SK-N-SH (cell line): ENCODE measurements at regions of chr7 and their contacts with region 1.

Region 1: DNA sequence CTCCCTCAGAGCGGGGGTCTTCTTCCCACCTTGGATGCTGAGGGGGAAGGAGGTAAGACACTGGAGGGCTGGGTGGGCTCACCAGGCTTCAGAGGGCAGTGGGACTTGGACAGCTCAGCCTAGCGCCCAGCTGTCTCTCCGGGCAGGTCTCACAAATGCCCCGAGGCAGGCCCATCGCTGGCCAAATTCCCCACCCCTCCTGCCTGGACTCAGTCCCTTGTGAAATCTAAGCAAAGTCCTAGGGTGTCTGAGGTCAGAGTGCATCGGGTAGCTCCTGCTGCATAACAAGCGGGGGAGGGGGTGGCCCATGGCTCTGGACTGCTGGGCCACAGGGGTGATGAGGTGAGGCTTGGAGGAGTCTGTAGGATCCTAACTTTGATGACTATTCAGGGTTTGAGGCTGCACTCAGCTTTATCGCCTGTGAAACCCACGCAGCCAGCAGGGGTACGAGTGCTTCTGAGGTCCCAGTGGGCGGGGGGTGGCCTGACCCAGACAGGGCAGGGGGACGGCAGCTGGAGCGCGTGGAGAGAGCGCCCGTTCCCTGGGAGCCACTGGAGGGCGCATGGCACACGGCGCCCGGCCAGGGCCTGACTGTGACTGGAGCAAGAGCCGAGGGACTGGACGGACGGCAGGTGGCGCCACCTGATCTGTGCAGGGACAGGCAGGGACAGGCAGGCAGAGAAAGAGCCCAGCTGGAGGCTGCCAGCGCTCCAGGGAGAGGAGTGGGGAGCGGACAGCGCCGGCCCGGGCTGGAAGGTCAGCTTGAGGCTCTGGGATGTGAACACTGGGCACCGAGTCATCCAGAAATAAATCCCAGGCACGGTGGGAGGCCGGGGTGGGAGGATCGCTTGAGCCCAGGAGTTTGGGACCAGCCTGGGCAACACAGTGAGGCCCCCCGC is 10.0 kb downstream of the CYP2W1 start:
- DNase-seq: peak; percentile 98
- H3K4me3 ChIP-seq: peak overlapping the region in 1 of 2 experiments; percentile 24; a peak in 1 of 4 replicates
- H3K27ac ChIP-seq: no peak overlapping the region
- H3K4me1 ChIP-seq: peaks cover 3 to 7% of the 10 kb centered on the region in 2 experiments; a peak in 2 of 4 replicates
- H3K27me3 ChIP-seq: no peaks in the 10 kb centered on the region
- CTCF ChIP-seq: peak; percentile 100
- EP300 ChIP-seq: 0 out of 4 replicates have a peak, but pooled peaks of 1 of the 2 experiments have one; percentile 17
- RAD21 ChIP-seq: peak; percentile 100

Region 2: GRCh38 chr7:964401-965231 is 28.3 kb before region 1 on chr7:
- CTCF ChIA-PET with region 1: interaction called, 19 read pairs
- POLR2A ChIA-PET with region 1: no interaction called
- DNase-seq: peak; percentile 89
- H3K4me3 ChIP-seq: no peak overlapping the region
- H3K27ac ChIP-seq: peak overlapping the region in 1 of 2 experiments; percentile 39; a peak in 2 of 4 replicates
- H3K4me1 ChIP-seq: peaks cover 4 to 24% of the 10 kb centered on the region in 2 experiments; a peak in 2 of 4 replicates
- H3K27me3 ChIP-seq: no peaks in the 10 kb centered on the region
- CTCF ChIP-seq: peak; percentile 50
- EP300 ChIP-seq: peak in 1 of 2 experiments; percentile 80; a peak in 2 of 4 replicates
- RAD21 ChIP-seq: peak; percentile 60

Region 3: GRCh38 chr7:1028031-1028770 is 35.2 kb after region 1 on chr7:
- CTCF ChIA-PET with region 1: interaction called, 101 read pairs
- POLR2A ChIA-PET with region 1: interaction called, 3 read pairs
- DNase-seq: peak; percentile 100
- H3K4me3 ChIP-seq: peak overlapping the region; percentile 74 to 93
- H3K27ac ChIP-seq: peak overlapping the region; percentile 70 to 75
- H3K4me1 ChIP-seq: peaks cover 11 to 14% of the 10 kb centered on the region in 2 experiments; a peak in 3 of 4 replicates
- H3K27me3 ChIP-seq: no peaks in the 10 kb centered on the region
- CTCF ChIP-seq: no peak
- EP300 ChIP-seq: no peak
- RAD21 ChIP-seq: no peak

Region 4: GRCh38 chr7:1086588-1087464 is 93.9 kb after region 1 on chr7:
- CTCF ChIA-PET with region 1: interaction called, 126 read pairs
- POLR2A ChIA-PET with region 1: no interaction called
- DNase-seq: peak; percentile 94
- H3K4me3 ChIP-seq: peak overlapping the region; percentile 33 to 62
- H3K27ac ChIP-seq: peak overlapping the region in 1 of 2 experiments; percentile 31; a peak in 1 of 4 replicates
- H3K4me1 ChIP-seq: peaks cover 25 to 44% of the 10 kb centered on the region in 2 experiments
- H3K27me3 ChIP-seq: no peaks in the 10 kb centered on the region
- CTCF ChIP-seq: peak; percentile 99
- EP300 ChIP-seq: no peak
- RAD21 ChIP-seq: peak; percentile 60

Region 5: DNA sequence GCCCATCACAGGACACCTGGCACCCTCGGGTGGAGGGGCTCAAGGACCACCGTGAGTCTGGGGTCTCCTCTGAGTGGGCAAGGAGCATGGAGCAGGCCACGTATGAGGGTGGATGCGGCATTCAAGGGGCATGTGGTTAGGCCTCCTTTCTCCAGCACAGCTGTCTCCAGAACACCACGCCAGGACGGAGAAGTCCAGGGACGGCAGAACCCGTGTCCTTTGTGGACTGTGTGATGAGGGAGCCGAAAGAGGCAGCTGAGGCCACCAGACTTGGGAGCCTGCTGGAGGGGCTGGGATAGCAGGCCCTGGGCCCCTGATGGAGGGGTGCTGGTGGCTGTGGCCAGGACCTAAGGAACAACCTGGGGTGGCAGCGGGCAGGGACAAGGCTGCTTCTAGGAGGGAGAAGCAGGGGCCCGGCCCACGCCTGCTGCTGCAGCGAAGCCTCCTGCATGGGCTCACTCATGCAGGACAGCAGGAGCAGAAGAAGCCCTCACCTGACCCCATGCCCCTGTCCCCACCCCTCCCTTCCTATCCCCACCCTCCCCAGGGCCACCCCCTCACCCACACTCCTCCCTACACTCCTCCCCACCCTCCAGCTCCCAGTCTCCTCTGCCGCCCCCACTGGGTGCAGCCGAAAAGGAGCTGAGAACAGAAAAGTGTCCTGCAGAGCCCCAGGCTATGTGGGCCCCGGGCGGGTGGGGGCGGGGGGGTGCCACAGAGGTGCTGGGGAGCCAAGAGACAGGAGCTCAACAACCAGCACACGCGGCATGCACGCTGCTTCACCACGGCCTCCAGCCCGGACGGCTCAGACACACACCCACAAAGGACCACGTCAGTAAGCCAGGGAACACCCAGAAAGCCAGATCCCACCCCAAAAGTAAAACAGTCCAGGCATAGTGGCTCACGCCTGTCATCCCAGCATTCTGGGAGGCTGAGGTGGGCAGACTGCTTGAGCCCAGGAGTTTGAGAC is 137.3 kb after region 1 on chr7:
- CTCF ChIA-PET with region 1: interaction called, 65 read pairs
- POLR2A ChIA-PET with region 1: no interaction called
- DNase-seq: peak; percentile 14
- H3K4me3 ChIP-seq: no peak overlapping the region
- H3K27ac ChIP-seq: no peak overlapping the region
- H3K4me1 ChIP-seq: no peaks in the 10 kb centered on the region
- H3K27me3 ChIP-seq: no peaks in the 10 kb centered on the region
- CTCF ChIP-seq: no peak
- EP300 ChIP-seq: no peak
- RAD21 ChIP-seq: no peak

Region 6: GRCh38 chr7:1169409-1170368 is 176.7 kb after region 1 on chr7:
- CTCF ChIA-PET with region 1: interaction called, 64 read pairs
- POLR2A ChIA-PET with region 1: no interaction called
- DNase-seq: peak; percentile 86
- H3K4me3 ChIP-seq: peak overlapping the region in 1 of 2 experiments; percentile 31; a peak in 1 of 4 replicates
- H3K27ac ChIP-seq: no peak overlapping the region
- H3K4me1 ChIP-seq: peaks cover 0 to 2% of the 10 kb centered on the region in 2 experiments; a peak in 1 of 4 replicates
- H3K27me3 ChIP-seq: no peaks in the 10 kb centered on the region
- CTCF ChIP-seq: peak; percentile 72
- EP300 ChIP-seq: no peak
- RAD21 ChIP-seq: peak; percentile 14; the same call in 1 of the 2 replicates